ENCODE measurements at regions of chr2 and their contacts with region 1.

Region 1: GRCh38 chr2:218395797-218396687 is 3.6 kb upstream of the CTDSP1 start:
- DNase-seq: peak; percentile 97
- ATAC-seq: peak; percentile 68
- H3K4me3 Mint-ChIP-seq: peak overlapping the region; percentile 85
- H3K27ac Mint-ChIP-seq: peak overlapping the region; percentile 92
- H3K4me1 Mint-ChIP-seq: peaks cover 29% of the 10 kb centered on the region
- H3K27me3 Mint-ChIP-seq: peaks cover 6% of the 10 kb centered on the region

Region 2: GRCh38 chr2:218216674-218217359 is 179.2 kb before region 1 on chr2 and contains the start of gene ARPC2:
- CTCF ChIA-PET with region 1: no interaction called
- POLR2A ChIA-PET with region 1: no interaction called
- intact Hi-C with region 1: loop called (anchors 1 to 2 kb)
- DNase-seq: peak; percentile 96
- ATAC-seq: peak; percentile 64
- H3K4me3 Mint-ChIP-seq: peak within 1 kb of the TSS; percentile 81
- H3K27ac Mint-ChIP-seq: peak within 1 kb of the TSS; percentile 96
- H3K4me1 Mint-ChIP-seq: peaks cover 34% of the 10 kb centered on the region
- H3K27me3 Mint-ChIP-seq: no peaks in the 10 kb centered on the region
- total RNA-seq, gene ARPC2: 563 to 632 TPM

Region 3: GRCh38 chr2:218292048-218293014 is 103.7 kb before region 1 on chr2 and contains the start of gene TMBIM1:
- CTCF ChIA-PET with region 1: interaction called, 4 read pairs
- POLR2A ChIA-PET with region 1: no interaction called
- intact Hi-C with region 1: loop called (anchors 1 to 5 kb)
- DNase-seq: peak; percentile 87
- ATAC-seq: peak; percentile 84
- H3K4me3 Mint-ChIP-seq: peak within 1 kb of the TSS; percentile 87
- H3K27ac Mint-ChIP-seq: peak within 1 kb of the TSS; percentile 91
- H3K4me1 Mint-ChIP-seq: peaks cover 53% of the 10 kb centered on the region
- H3K27me3 Mint-ChIP-seq: no peaks in the 10 kb centered on the region
- total RNA-seq, gene TMBIM1: 51.1 to 54.0 TPM

Region 4: DNA sequence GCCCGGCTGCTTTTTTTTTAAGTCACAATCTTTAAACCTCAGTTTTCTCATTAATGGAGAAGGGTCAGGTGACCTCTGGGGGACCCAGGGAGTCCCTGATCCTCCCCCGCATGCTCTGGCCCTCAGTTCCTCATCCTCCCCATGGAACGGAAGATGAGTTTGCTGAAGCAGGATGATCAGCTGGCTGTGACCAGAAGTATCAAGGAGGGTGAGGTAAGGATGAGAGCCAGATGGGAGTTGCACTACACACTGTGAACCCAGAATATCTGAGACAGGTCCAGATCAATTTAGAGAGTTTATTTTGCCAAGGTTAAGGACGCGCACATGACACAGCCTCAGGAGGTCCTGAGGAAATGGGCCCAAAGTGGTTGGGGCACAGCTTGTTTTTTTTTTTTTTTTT is 35.6 kb before region 1 on chr2:
- CTCF ChIA-PET with region 1: interaction called, 3 read pairs
- POLR2A ChIA-PET with region 1: no interaction called
- intact Hi-C with region 1: loop called in 1 of 2 experiments (anchors 5 kb)
- DNase-seq: no peak
- ATAC-seq: no peak
- H3K4me3 Mint-ChIP-seq: no peak overlapping the region
- H3K27ac Mint-ChIP-seq: no peak overlapping the region
- H3K4me1 Mint-ChIP-seq: no peaks in the 10 kb centered on the region
- H3K27me3 Mint-ChIP-seq: no peaks in the 10 kb centered on the region

Region 5: GRCh38 chr2:218406209-218406948 is 10.3 kb after region 1 on chr2:
- CTCF ChIA-PET with region 1: no interaction called
- POLR2A ChIA-PET with region 1: no interaction called
- intact Hi-C with region 1: loop called (anchors 1 kb)
- DNase-seq: peak; percentile 97
- ATAC-seq: peak; percentile 88
- H3K4me3 Mint-ChIP-seq: peak overlapping the region; percentile 75
- H3K27ac Mint-ChIP-seq: peak overlapping the region; percentile 90
- H3K4me1 Mint-ChIP-seq: peaks cover 38% of the 10 kb centered on the region
- H3K27me3 Mint-ChIP-seq: peaks cover 5% of the 10 kb centered on the region

Region 6: DNA sequence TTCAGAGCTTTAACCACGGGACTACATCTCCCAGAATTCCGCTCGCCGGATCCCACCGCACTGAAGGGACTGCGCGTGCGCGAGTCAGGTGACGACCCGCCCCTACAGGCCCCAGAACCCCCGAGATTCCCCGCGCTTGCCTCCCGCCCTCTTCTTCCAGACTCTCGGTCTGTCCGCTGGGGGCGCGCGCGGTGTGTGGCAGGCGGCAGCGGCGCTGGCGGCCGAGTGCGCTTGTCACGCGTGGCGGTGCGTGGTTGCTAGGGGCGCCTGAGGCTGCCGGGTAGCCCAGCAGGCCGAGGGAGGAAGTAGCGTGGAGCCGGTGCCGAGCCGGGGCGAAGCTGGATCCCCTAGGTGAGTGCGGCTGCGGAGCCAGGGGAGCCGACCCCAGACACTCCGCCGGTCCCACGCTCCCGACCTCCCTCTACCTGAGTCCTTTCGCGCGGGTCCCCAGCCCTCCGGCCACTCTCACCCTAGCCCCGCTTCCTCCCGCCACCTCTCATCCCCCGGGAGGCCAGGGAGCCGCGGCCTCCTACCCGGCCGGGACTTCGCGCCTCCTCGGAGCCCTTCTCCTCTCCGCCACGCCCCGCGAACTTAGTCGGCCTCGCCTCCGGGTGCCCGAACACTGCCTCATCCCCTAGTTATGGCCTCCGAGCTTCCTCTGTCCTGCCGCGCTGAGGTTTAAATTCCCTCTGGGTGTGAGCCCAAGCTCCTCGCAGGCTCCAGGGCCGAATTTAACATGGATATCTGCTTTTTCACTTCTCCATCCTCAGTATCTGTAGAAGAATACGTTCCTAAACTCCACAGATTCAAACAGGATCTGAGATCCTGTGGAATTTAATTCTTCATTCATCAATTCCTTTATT is 314.9 kb after region 1 on chr2 and contains the start of gene TTLL4:
- CTCF ChIA-PET with region 1: no interaction called
- POLR2A ChIA-PET with region 1: no interaction called
- intact Hi-C with region 1: loop called in 1 of 2 experiments (anchors 1 kb)
- DNase-seq: peak; percentile 99
- ATAC-seq: peak; percentile 98
- H3K4me3 Mint-ChIP-seq: peak within 1 kb of the TSS; percentile 96
- H3K27ac Mint-ChIP-seq: peak within 1 kb of the TSS; percentile 80
- H3K4me1 Mint-ChIP-seq: peaks cover 20% of the 10 kb centered on the region
- H3K27me3 Mint-ChIP-seq: no peaks in the 10 kb centered on the region
- total RNA-seq, gene TTLL4: 33.7 to 46.6 TPM

Region 7: GRCh38 chr2:219278655-219279516 is 882.8 kb after region 1 on chr2 and contains the start of gene DNAJB2:
- CTCF ChIA-PET with region 1: no interaction called
- POLR2A ChIA-PET with region 1: no interaction called
- intact Hi-C with region 1: loop called in 1 of 2 experiments (anchors 1 kb)
- DNase-seq: peak; percentile 100
- ATAC-seq: peak; percentile 86
- H3K4me3 Mint-ChIP-seq: peak within 1 kb of the TSS; percentile 96
- H3K27ac Mint-ChIP-seq: peak within 1 kb of the TSS; percentile 95
- H3K4me1 Mint-ChIP-seq: peaks cover 37% of the 10 kb centered on the region
- H3K27me3 Mint-ChIP-seq: no peaks in the 10 kb centered on the region
- total RNA-seq, gene DNAJB2: 51.8 to 62.8 TPM